CD8-positive, alpha-beta memory T cell (primary cell): ENCODE measurements at regions of chr20 and their contacts with region 1.

Region 1: GRCh38 chr20:3854462-3854871 is 7.8 kb downstream of the MAVS start:
- DNase-seq: no peak
- H3K4me3 ChIP-seq: no peak overlapping the region
- H3K4me3 Mint-ChIP-seq: no peak overlapping the region
- H3K27ac ChIP-seq: no peak overlapping the region
- H3K27ac Mint-ChIP-seq: peak overlapping the region in 2 of 8 donors; percentile 24 to 48
- H3K4me1 ChIP-seq: peaks cover 3% of the 10 kb centered on the region
- H3K4me1 Mint-ChIP-seq: peaks cover 11 to 20% (median 15%) of the 10 kb centered on the region in 3 donors
- H3K27me3 ChIP-seq: no peaks in the 10 kb centered on the region
- H3K27me3 Mint-ChIP-seq: no peaks in the 10 kb centered on the region

Region 2: DNA sequence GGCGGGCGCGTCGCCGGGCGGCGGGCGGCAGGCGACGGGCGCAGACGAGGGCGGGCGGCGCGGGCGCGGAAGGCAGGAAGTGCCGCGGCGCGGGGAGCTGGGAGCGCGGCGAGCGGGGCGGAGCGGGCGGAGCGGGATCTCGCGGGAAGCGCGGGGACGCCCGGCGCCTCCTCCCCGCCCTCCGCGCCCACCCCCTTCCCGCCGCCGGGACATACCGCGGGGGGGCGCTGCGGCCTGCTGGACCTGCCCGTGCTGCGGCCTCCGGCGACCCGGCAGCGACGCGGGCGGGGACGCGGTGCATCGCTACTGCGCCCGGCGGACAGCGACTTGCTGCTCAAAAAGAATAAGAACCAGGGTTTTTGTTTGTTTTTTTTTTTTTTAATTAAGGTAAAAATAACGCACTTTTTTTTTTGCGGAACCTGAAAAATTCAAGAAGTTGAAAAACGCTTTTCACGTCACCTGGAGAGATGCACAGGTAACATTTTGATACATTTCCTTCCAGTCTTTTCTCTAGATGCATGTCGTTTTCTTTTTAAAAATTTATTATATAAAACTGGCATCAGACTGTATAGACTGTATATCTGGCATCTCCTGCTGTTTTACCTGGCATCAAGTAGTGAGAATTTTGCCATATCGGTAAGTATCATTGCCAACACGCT is 67.7 kb before region 1 on chr20 and contains the start of gene CENPB:
- CTCF ChIA-PET with region 1: interaction called, 10 read pairs
- POLR2A ChIA-PET with region 1: interaction called, 3 read pairs
- DNase-seq: peak; percentile 87 to 92 (median 89)
- H3K4me3 ChIP-seq: peak within 1 kb of the TSS; percentile 46
- H3K4me3 Mint-ChIP-seq: peak within 1 kb of the TSS; percentile 75 to 88 (median 83)
- H3K27ac ChIP-seq: peak within 1 kb of the TSS; percentile 16
- H3K27ac Mint-ChIP-seq: peak within 1 kb of the TSS; percentile 68 to 92 (median 85)
- H3K4me1 ChIP-seq: peaks cover 23% of the 10 kb centered on the region
- H3K4me1 Mint-ChIP-seq: peaks cover 29 to 39% (median 34%) of the 10 kb centered on the region in 3 donors
- H3K27me3 ChIP-seq: no peaks in the 10 kb centered on the region
- H3K27me3 Mint-ChIP-seq: no peaks in the 10 kb centered on the region
- total RNA-seq, gene CENPB: 66.4 to 69.9 TPM

Region 3: GRCh38 chr20:3811467-3812258 is 42.8 kb before region 1 on chr20:
- CTCF ChIA-PET with region 1: interaction called, 11 read pairs
- POLR2A ChIA-PET with region 1: interaction called, 5 read pairs
- DNase-seq: peak; percentile 86 to 97 (median 92)
- H3K4me3 ChIP-seq: peak overlapping the region; percentile 52
- H3K4me3 Mint-ChIP-seq: peak overlapping the region; percentile 88 to 94 (median 93)
- H3K27ac ChIP-seq: peak overlapping the region; percentile 66
- H3K27ac Mint-ChIP-seq: peak overlapping the region; percentile 97 to 100 (median 100)
- H3K4me1 ChIP-seq: peaks cover 80% of the 10 kb centered on the region
- H3K4me1 Mint-ChIP-seq: peaks cover 73 to 85% (median 80%) of the 10 kb centered on the region in 3 donors
- H3K27me3 ChIP-seq: no peaks in the 10 kb centered on the region
- H3K27me3 Mint-ChIP-seq: no peaks in the 10 kb centered on the region

Region 4: GRCh38 chr20:3820048-3820900 is 34.2 kb before region 1 on chr20 and contains the start of gene AP5S1:
- CTCF ChIA-PET with region 1: interaction called, 33 read pairs
- POLR2A ChIA-PET with region 1: interaction called, 5 read pairs
- DNase-seq: peak; percentile 89 to 94 (median 93)
- H3K4me3 ChIP-seq: peak within 1 kb of the TSS; percentile 82
- H3K4me3 Mint-ChIP-seq: peak within 1 kb of the TSS; percentile 87 to 97 (median 94)
- H3K27ac ChIP-seq: peak within 1 kb of the TSS; percentile 94
- H3K27ac Mint-ChIP-seq: peak within 1 kb of the TSS; percentile 96 to 100 (median 97)
- H3K4me1 ChIP-seq: peaks cover 49% of the 10 kb centered on the region
- H3K4me1 Mint-ChIP-seq: peaks cover 45 to 65% (median 57%) of the 10 kb centered on the region in 3 donors
- H3K27me3 ChIP-seq: no peaks in the 10 kb centered on the region
- H3K27me3 Mint-ChIP-seq: no peaks in the 10 kb centered on the region
- total RNA-seq, gene AP5S1: 14.0 to 15.7 TPM

Region 5: GRCh38 chr20:4082406-4083097 is 228.1 kb after region 1 on chr20:
- CTCF ChIA-PET with region 1: interaction called, 10 read pairs
- POLR2A ChIA-PET with region 1: no interaction called
- DNase-seq: peak in 3 of 5 donors; percentile 12 to 64 (median 60)
- H3K4me3 ChIP-seq: peak overlapping the region; percentile 18
- H3K4me3 Mint-ChIP-seq: peak overlapping the region in 6 of 7 donors; percentile 28 to 87 (median 56)
- H3K27ac ChIP-seq: peak overlapping the region; percentile 57
- H3K27ac Mint-ChIP-seq: peak overlapping the region; percentile 45 to 96 (median 79)
- H3K4me1 ChIP-seq: peaks cover 28% of the 10 kb centered on the region
- H3K4me1 Mint-ChIP-seq: peaks cover 35 to 50% (median 49%) of the 10 kb centered on the region in 3 donors
- H3K27me3 ChIP-seq: no peaks in the 10 kb centered on the region
- H3K27me3 Mint-ChIP-seq: peaks cover 0 to 4% of the 10 kb centered on the region in 2 donors